Kidney (tissue), 22 donors: ENCODE measurements at regions of chr1 and their contacts with region 1.

Region 1: DNA sequence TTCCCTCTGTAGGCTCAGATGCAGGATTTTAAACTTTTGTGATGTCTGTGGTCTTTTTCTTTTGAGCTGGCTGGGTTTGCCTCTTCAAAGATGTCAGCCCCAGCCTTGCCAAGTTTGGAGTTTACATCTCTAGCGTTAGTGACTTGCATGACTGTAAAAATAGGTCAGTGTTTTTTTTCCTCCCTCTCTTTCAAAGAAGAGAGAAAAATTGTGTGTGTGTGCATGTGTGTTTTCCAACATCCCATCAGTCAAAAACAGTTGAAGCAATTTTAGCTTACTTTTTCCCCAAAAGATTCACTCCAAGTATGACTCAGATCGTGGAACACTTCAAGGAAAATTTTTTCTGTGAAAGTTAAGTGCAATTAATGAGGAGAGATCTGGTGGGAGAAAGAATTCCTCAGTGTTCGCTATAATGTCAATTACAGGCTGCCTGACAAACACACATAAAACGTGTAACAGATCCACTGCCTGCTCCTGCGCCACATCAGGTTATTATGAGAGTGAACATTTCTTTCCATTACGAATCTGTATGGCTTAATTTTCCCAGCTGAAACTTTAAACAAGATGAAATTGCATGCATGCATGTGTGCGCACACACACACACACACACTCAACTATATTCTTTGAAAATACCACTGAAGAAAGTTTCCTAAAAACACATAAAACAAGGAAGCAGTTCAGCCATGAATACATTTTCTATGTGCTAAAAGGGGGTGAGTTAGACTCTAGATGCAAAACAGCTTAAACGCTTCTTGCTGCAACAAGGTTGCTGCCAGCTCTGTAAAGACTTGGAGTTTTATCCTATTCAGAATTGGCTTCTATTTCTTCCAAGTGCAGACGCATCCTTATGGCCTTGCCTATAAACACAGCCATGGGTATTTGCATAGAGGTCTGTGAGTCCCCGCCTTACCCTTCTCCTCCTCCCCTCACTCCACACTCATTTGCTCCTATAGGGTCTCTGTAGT is 55.5 kb downstream of the TLR5 start:
- DNase-seq: peak in 1 of 5 donors; percentile 17
- H3K4me3 ChIP-seq: no peak overlapping the region
- H3K27ac ChIP-seq: no peak overlapping the region
- H3K4me1 ChIP-seq: no peaks in the 10 kb centered on the region
- H3K27me3 ChIP-seq: no peaks in the 10 kb centered on the region
- CTCF ChIP-seq: no peak

Region 2: GRCh38 chr1:222794656-222795474 is 292.7 kb before region 1 on chr1:
- intact Hi-C with region 1: loop called (anchors 5 kb)
- DNase-seq: peak in 1 of 5 donors; percentile 74
- H3K4me3 ChIP-seq: no peak overlapping the region
- H3K27ac ChIP-seq: no peak overlapping the region
- H3K4me1 ChIP-seq: peaks cover 0 to 8% (median 6%) of the 10 kb centered on the region in 3 donors
- H3K27me3 ChIP-seq: no peaks in the 10 kb centered on the region
- CTCF ChIP-seq: peak; percentile 9

Region 3: DNA sequence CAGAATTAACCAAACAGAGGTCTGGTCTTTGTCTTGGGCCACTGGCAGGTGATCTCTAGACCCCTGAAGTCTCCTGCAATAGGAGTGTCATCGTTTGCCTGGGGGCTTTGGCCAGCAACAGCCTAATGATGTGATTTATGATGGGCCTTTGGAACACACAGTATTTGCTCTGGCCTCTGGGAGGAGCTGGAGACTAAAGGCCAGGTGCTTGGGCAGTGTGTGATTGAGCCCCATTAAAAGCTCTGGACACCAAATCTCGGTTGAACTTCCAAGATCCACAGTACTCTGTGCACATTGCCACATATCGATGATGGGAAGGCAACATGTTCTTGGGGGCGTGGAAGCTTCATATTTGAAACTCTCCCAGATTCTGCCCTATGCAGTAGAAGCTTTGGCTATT is 87.5 kb after region 1 on chr1:
- intact Hi-C with region 1: no loop called
- DNase-seq: peak in 3 of 5 donors; percentile 13 to 22 (median 19)
- H3K4me3 ChIP-seq: no peak overlapping the region
- H3K27ac ChIP-seq: no peak overlapping the region
- H3K4me1 ChIP-seq: no peaks in the 10 kb centered on the region
- H3K27me3 ChIP-seq: no peaks in the 10 kb centered on the region
- CTCF ChIP-seq: peak; percentile 8